ENCODE measurements at regions of chr14 and their contacts with region 1.

Region 1: GRCh38 chr14:23469127-23469905 is at the start of gene NGDN:
- DNase-seq: peak; percentile 97
- ATAC-seq: peak; percentile 97
- H3K4me3 ChIP-seq: peak within 1 kb of the TSS; percentile 96 to 98
- H3K27ac ChIP-seq: peak within 1 kb of the TSS; percentile 93
- H3K4me1 ChIP-seq: peaks cover 4% of the 10 kb centered on the region
- H3K27me3 ChIP-seq: no peaks in the 10 kb centered on the region
- CTCF ChIP-seq: peak; percentile 81
- total RNA-seq, gene NGDN: 24.7 TPM

Region 2: GRCh38 chr14:23577004-23577681 is 107.8 kb after region 1 on chr14:
- CTCF ChIA-PET with region 1: interaction called, 14 read pairs
- POLR2A ChIA-PET with region 1: no interaction called
- in situ Hi-C with region 1: no loop called
- intact Hi-C with region 1: no loop called
- DNase-seq: no peak
- ATAC-seq: no peak; the same call in 1 of the 2 replicates
- H3K4me3 ChIP-seq: peak overlapping the region in 1 of 2 experiments; percentile 13; a peak in 1 of 4 replicates
- H3K27ac ChIP-seq: no peak overlapping the region
- H3K4me1 ChIP-seq: no peaks in the 10 kb centered on the region
- H3K27me3 ChIP-seq: no peaks in the 10 kb centered on the region
- CTCF ChIP-seq: no peak

Measured in Panc1 (cell line).